Pancreas (tissue), 10 donors: ENCODE measurements at regions of chr5 and their contacts with region 1.

Region 1: DNA sequence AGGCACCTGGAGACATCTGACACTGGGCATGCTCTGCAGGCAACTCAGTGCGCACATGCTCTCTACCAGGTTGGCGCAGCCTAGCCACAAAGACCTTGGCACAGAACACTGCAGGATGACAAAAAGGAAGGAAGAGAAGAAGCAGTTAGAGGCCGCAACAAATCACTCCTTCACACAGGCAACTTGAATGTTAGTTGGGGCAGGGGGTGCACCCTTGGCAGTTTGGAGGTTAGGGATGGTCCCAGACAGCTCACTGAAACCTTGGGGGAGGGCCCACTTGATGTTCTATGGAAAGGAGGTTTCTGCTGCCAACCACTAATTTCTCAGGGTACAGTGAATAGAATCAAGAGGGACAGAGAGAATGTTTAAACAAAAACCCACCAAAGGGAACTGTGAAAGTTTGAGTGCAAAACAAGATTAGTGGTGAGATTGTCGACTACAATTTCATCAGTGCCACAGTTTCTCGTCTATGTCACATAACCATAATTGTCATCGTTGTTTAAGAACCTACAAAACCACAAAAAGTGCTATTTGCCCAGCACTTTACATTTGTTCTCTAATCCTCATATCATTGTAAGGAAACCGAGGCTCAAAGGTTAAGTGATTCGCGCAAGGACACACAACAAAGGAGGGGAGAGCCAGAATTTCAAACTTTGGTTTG is 48.7 kb downstream of the FBXW11 start:
- DNase-seq: peak in 2 of 6 donors; percentile 44 to 66
- ATAC-seq: peak; percentile 51 to 74 (median 64)
- H3K4me3 ChIP-seq: no peak overlapping the region
- H3K27ac ChIP-seq: peak overlapping the region; percentile 7 to 86 (median 54)
- H3K4me1 ChIP-seq: peaks cover 57 to 80% (median 73%) of the 10 kb centered on the region in 3 donors
- H3K27me3 ChIP-seq: no peaks in the 10 kb centered on the region
- CTCF ChIP-seq: no peak

Region 2: DNA sequence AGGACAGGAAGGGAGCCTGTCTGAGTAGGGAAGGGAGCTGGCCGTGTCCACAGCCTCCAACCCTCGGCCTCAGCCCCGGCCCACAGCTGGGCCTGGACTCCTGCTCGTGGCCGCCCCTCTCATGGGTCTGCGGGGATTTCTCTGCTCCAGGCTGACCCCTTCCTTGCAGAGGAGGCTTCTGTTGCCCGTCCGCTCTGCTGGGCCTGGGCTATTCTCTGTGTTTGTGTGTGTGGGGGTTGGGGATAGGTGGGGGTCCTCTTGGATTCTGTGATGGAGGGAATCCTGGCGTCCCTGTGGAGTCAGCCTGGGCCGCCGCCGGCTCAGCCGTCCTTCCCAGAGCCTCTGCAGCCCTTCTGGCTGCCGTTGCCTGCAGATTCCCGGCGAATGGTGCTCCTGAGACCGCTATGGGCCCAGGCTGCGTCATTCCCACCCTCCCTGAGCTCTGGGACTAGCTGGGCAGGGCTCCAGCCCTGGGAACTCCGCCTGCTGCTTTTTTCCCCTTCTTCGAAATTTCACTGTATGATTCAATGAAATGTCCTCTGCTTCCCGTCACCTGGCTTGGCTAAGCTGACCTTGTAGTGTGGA is 474.1 kb before region 1 on chr5:
- intact Hi-C with region 1: no loop called
- DNase-seq: peak in 5 of 6 donors; percentile 33 to 70 (median 53)
- ATAC-seq: peak; percentile 46 to 90 (median 83)
- H3K4me3 ChIP-seq: no peak overlapping the region
- H3K27ac ChIP-seq: no peak overlapping the region
- H3K4me1 ChIP-seq: no peaks in the 10 kb centered on the region
- H3K27me3 ChIP-seq: no peaks in the 10 kb centered on the region
- CTCF ChIP-seq: no peak

Region 3: GRCh38 chr5:172006321-172007174 is 48.8 kb after region 1 on chr5 and contains the start of gene FBXW11:
- intact Hi-C with region 1: loop called in 1 of 3 experiments (anchors 10 kb)
- DNase-seq: peak; percentile 95 to 99 (median 96)
- ATAC-seq: peak; percentile 86 to 93 (median 90)
- H3K4me3 ChIP-seq: peak within 1 kb of the TSS; percentile 83 to 97 (median 90)
- H3K27ac ChIP-seq: peak within 1 kb of the TSS; percentile 95 to 99 (median 96)
- H3K4me1 ChIP-seq: peaks cover 20 to 32% (median 28%) of the 10 kb centered on the region in 3 donors
- H3K27me3 ChIP-seq: no peaks in the 10 kb centered on the region
- CTCF ChIP-seq: no peak
- total RNA-seq, gene FBXW11: 23.7 to 43.8 (median 27.4) TPM

Region 4: GRCh38 chr5:172044631-172045314 is 87.1 kb after region 1 on chr5:
- intact Hi-C with region 1: no loop called
- DNase-seq: no peak
- ATAC-seq: no peak
- H3K4me3 ChIP-seq: no peak overlapping the region
- H3K27ac ChIP-seq: no peak overlapping the region
- H3K4me1 ChIP-seq: peaks cover 0 to 7% (median 0%) of the 10 kb centered on the region in 3 donors
- H3K27me3 ChIP-seq: no peaks in the 10 kb centered on the region
- CTCF ChIP-seq: no peak